ENCODE measurements at regions of chr9 and their contacts with region 1.

Region 1: GRCh38 chr9:117103438-117104110 is 311.3 kb downstream of the ASTN2 start:
- DNase-seq: no peak
- H3K4me3 ChIP-seq: no peak overlapping the region
- H3K27ac ChIP-seq: no peak overlapping the region
- H3K4me1 ChIP-seq: no peaks in the 10 kb centered on the region
- H3K27me3 ChIP-seq: no peaks in the 10 kb centered on the region
- CTCF ChIP-seq: no peak
- EP300 ChIP-seq: no peak
- POLR2A ChIP-seq: no peak

Region 2: GRCh38 chr9:116656501-116656971 is 447.0 kb before region 1 on chr9:
- in situ Hi-C with region 1: no loop called
- intact Hi-C with region 1: no loop called
- DNase-seq: no peak
- H3K4me3 ChIP-seq: no peak overlapping the region
- H3K27ac ChIP-seq: no peak overlapping the region
- H3K4me1 ChIP-seq: peaks cover 0 to 6% (median 1%) of the 10 kb centered on the region in 4 donors
- H3K27me3 ChIP-seq: no peaks in the 10 kb centered on the region
- CTCF ChIP-seq: no peak
- EP300 ChIP-seq: no peak
- POLR2A ChIP-seq: no peak

Region 3: DNA sequence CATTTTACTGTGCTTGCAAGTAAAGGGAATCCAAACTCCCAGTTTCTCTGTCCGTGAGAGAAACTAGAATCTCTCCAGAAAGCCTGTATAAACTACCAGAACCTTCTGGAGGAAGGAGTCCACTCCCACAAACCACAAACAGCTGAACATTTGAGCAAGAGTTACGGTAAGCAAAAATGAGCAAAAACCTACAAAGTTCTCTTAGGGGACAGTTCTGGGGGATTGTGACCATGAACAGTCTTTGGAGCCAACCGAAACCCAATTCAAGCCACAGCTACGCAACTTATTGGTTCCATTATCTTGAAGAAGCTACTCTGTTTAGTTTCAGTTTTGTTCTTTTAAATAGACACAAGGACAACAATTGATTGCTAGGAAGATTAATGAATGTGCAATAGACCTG is 19.4 kb before region 1 on chr9:
- in situ Hi-C with region 1: no loop called
- intact Hi-C with region 1: loop called (anchors 1 kb)
- DNase-seq: no peak
- H3K4me3 ChIP-seq: no peak overlapping the region
- H3K27ac ChIP-seq: no peak overlapping the region
- H3K4me1 ChIP-seq: no peaks in the 10 kb centered on the region
- H3K27me3 ChIP-seq: no peaks in the 10 kb centered on the region
- CTCF ChIP-seq: no peak
- EP300 ChIP-seq: no peak
- POLR2A ChIP-seq: no peak

Measured in transverse colon (tissue), 4 donors.